ENCODE measurements at regions of chr6 and their contacts with region 1.

Region 1: GRCh38 chr6:133952815-133953633 is at the start of gene TBPL1:
- DNase-seq: peak; percentile 78
- ATAC-seq: peak; percentile 96
- H3K4me3 ChIP-seq: peak within 1 kb of the TSS; percentile 92 to 94
- H3K27ac ChIP-seq: peak within 1 kb of the TSS; percentile 87
- H3K4me1 ChIP-seq: peaks cover 39% of the 10 kb centered on the region
- H3K27me3 ChIP-seq: no peaks in the 10 kb centered on the region
- CTCF ChIP-seq: no peak
- total RNA-seq, gene TBPL1: 39.7 TPM

Region 2: GRCh38 chr6:133973109-133973971 is 20.3 kb after region 1 on chr6:
- CTCF ChIA-PET with region 1: interaction called, 3 read pairs
- POLR2A ChIA-PET with region 1: interaction called, 19 read pairs
- in situ Hi-C with region 1: no loop called
- intact Hi-C with region 1: no loop called
- DNase-seq: no peak
- ATAC-seq: peak; percentile 72
- H3K4me3 ChIP-seq: no peak overlapping the region
- H3K27ac ChIP-seq: peak overlapping the region; percentile 23
- H3K4me1 ChIP-seq: peaks cover 33% of the 10 kb centered on the region
- H3K27me3 ChIP-seq: no peaks in the 10 kb centered on the region
- CTCF ChIP-seq: peak; percentile 73; the same call in 1 of the 2 replicates

Measured in Panc1 (cell line).